Activated B cell treated with CpG ODN at 0.5 μM for 24 hours (primary cell): ENCODE measurements at regions of chr13 and their contacts with region 1.

Region 1: DNA sequence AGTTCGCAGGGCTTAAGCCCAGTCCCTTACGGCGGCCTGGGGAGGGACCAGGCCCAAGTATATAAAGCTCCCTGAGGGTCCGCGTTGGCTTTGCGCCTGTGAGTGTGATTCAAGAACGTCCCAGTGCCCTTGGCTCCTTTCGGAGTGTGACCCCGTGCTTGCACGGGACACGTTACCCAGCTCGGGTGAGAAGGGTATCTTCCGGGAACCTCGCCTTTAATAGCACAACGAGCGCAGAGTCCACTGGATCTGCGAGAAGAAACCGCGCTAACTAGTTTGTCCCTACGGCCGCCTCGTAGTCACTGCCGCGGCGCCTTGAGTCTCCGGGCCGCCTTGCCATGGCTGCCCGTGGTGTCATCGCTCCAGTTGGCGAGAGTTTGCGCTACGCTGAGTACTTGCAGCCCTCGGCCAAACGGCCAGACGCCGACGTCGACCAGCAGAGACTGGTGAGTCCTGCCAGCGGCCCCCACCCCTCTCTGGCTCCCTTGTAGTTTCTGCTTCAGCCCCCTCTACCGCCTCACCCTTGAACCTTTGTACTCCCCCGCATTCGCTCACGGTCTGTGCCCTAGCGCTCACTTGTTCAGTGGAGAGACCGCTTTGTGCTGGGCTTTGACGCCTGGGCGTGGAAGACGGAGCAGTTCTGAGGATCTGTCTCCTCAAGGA is at the start of gene DNAJC15:
- DNase-seq: peak; percentile 81
- ATAC-seq: peak; percentile 85
- H3K4me3 Mint-ChIP-seq: peak within 1 kb of the TSS; percentile 94
- H3K27ac Mint-ChIP-seq: peak within 1 kb of the TSS; percentile 97
- H3K4me1 Mint-ChIP-seq: peaks cover 47% of the 10 kb centered on the region
- H3K27me3 Mint-ChIP-seq: no peaks in the 10 kb centered on the region
- CTCF ChIP-seq: no peak
- total RNA-seq, gene DNAJC15: 19.1 and 19.3 TPM in 2 replicates

Region 2: DNA sequence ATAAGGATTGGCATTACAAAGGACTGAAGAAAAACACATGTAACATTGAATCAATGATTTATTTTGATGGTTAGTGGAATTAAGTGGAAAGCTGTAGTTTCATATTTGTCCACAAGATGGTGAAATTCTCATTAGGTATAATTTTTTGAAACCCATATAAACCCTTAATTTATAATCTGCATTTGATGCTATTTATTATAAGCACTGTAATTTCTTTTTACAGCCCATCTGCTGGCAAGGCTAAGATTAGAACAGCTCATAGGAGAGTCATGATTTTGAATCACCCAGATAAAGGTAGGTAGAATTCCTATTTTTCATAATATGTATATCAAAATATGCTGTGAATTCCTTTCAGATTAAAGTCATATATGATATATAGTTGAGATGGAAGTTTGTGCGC is 62.1 kb after region 1 on chr13:
- CTCF ChIA-PET with region 1: interaction called, 8 read pairs
- POLR2A ChIA-PET with region 1: interaction called, 6 read pairs
- intact Hi-C with region 1: loop called (anchors 2 kb)
- DNase-seq: no peak
- ATAC-seq: peak; percentile 28
- H3K4me3 Mint-ChIP-seq: no peak overlapping the region
- H3K27ac Mint-ChIP-seq: no peak overlapping the region
- H3K4me1 Mint-ChIP-seq: peaks cover 23% of the 10 kb centered on the region
- H3K27me3 Mint-ChIP-seq: no peaks in the 10 kb centered on the region
- CTCF ChIP-seq: no peak